T-cell (primary cell): ENCODE measurements at regions of chr15 and their contacts with region 1.

Region 1: DNA sequence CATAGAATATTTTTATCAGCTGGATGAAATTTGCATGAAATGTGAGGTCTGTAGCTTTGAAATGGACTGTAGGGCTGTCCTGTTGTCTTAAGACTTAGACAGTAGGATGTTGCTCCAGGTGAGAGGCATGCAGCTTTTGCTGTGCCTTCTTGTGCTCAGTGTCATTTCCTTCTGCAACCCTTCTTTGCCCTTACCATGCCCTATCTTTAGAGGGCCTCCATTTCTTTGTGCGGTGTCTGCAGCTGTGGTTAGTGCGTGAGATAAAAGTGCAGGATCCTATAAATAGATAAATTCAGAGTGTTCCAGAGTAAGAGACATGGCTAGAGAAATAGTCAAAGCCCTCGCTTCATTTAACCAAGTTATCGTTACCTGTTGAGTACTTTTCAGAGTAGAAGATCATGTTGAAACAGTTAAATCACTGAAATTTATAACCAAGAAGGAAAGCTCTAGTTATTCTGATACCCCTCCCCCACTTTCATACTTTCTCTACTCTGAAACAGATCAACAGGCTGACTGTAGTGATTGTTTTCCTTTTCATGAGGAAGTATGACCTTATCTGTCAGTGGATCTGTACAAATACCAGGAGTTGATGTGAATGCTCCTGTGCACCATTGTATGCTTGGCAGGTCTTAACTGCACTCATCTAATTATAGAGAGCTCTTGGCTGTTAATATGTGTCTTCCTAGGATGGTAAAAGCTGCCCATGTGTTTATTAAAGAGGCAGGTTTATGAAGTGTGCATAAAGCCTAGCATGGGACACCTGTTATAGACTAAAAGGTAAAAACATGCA is 18.2 kb downstream of the EIF3J start:
- DNase-seq: no peak
- ATAC-seq: peak; percentile 79 to 84 (median 84)
- H3K4me3 ChIP-seq: no peak overlapping the region
- H3K4me3 Mint-ChIP-seq: peak overlapping the region in 2 of 3 donors; percentile 2 to 18
- H3K27ac ChIP-seq: peak overlapping the region; percentile 30
- H3K27ac Mint-ChIP-seq: peak overlapping the region; percentile 53 to 84
- H3K4me1 ChIP-seq: peaks cover 13 to 15% of the 10 kb centered on the region in 2 experiments
- H3K4me1 Mint-ChIP-seq: peaks cover 40 to 46% (median 43%) of the 10 kb centered on the region in 3 donors
- H3K27me3 ChIP-seq: no peaks in the 10 kb centered on the region
- H3K27me3 Mint-ChIP-seq: no peaks in the 10 kb centered on the region

Region 2: GRCh38 chr15:44536962-44537734 is 18.0 kb before region 1 on chr15 and contains the start of gene EIF3J:
- CTCF ChIA-PET with region 1: interaction called in 1 of 2 experiments, 7 read pairs
- POLR2A ChIA-PET with region 1: interaction called, 3 to 15 read pairs
- DNase-seq: peak; percentile 85 to 98 (median 92)
- ATAC-seq: peak; percentile 90 to 95 (median 92)
- H3K4me3 ChIP-seq: peak within 1 kb of the TSS; percentile 90 to 91
- H3K4me3 Mint-ChIP-seq: peak within 1 kb of the TSS; percentile 83 to 92 (median 85)
- H3K27ac ChIP-seq: peak within 1 kb of the TSS; percentile 81
- H3K27ac Mint-ChIP-seq: peak within 1 kb of the TSS; percentile 88 to 91
- H3K4me1 ChIP-seq: peaks cover 17 to 27% of the 10 kb centered on the region in 2 experiments
- H3K4me1 Mint-ChIP-seq: peaks cover 54 to 58% (median 55%) of the 10 kb centered on the region in 3 donors
- H3K27me3 ChIP-seq: no peaks in the 10 kb centered on the region
- H3K27me3 Mint-ChIP-seq: no peaks in the 10 kb centered on the region
- total RNA-seq, gene EIF3J: 58.2 to 68.3 (median 64.4) TPM

Region 3: GRCh38 chr15:46386356-46386755 is 1831.2 kb after region 1 on chr15:
- CTCF ChIA-PET with region 1: no interaction called
- POLR2A ChIA-PET with region 1: no interaction called
- DNase-seq: no peak
- ATAC-seq: no peak
- H3K4me3 ChIP-seq: no peak overlapping the region
- H3K4me3 Mint-ChIP-seq: no peak overlapping the region
- H3K27ac ChIP-seq: no peak overlapping the region
- H3K27ac Mint-ChIP-seq: no peak overlapping the region
- H3K4me1 ChIP-seq: no peaks in the 10 kb centered on the region
- H3K4me1 Mint-ChIP-seq: no peaks in the 10 kb centered on the region
- H3K27me3 ChIP-seq: no peaks in the 10 kb centered on the region
- H3K27me3 Mint-ChIP-seq: no peaks in the 10 kb centered on the region